Activated B cell treated with CpG ODN at 0.5 μM for 24 hours (primary cell): ENCODE measurements at regions of chr4 and their contacts with region 1.

Region 1: GRCh38 chr4:152640058-152640833 is 39.6 kb downstream of the TMEM154 start:
- DNase-seq: no peak
- ATAC-seq: no peak
- H3K4me3 Mint-ChIP-seq: no peak overlapping the region
- H3K27ac Mint-ChIP-seq: peak overlapping the region; percentile 63
- H3K4me1 Mint-ChIP-seq: peaks cover 69% of the 10 kb centered on the region
- H3K27me3 Mint-ChIP-seq: no peaks in the 10 kb centered on the region
- CTCF ChIP-seq: peak; percentile 85

Region 2: DNA sequence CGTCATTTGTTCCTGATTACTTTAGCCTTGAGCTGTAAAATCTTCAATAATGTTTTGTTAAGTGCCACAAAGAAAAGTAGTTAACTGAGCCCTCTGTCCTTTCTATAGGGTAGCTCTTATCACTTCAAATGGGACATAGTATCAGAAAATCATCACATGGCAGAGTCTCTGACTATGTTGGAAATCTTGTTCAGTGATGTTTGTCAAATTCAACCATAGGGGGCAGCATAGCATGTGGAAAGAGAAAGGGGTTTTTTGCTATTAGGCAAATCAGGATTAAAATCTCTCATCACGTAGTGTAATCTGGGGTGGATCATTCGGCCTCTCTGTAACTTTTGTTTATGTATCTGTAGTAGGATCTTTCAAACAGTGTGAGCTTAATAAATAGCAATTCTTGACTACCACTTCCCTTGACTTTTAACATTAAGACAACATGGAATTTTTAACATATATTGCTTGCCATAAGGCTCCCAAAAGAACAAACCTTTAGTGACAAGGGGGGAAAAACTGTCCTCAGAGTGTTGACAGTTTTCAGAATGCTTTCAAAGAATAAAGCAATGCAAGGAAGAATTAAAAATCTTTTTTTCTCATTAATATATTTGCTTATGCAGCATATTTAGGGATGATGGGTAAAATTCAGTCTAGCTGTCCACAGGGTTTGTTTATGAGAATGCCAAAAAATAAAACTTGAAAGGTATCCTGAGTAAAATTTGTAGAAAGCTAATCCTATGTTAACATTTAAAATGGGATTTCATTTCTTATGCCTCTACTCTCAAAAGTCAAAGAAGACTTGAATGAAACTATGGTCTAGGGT is 231.5 kb before region 1 on chr4:
- CTCF ChIA-PET with region 1: interaction called, 8 read pairs
- POLR2A ChIA-PET with region 1: no interaction called
- intact Hi-C with region 1: loop called (anchors 1 kb)
- DNase-seq: no peak
- ATAC-seq: no peak
- H3K4me3 Mint-ChIP-seq: no peak overlapping the region
- H3K27ac Mint-ChIP-seq: no peak overlapping the region
- H3K4me1 Mint-ChIP-seq: peaks cover 5% of the 10 kb centered on the region
- H3K27me3 Mint-ChIP-seq: no peaks in the 10 kb centered on the region
- CTCF ChIP-seq: no peak

Region 3: DNA sequence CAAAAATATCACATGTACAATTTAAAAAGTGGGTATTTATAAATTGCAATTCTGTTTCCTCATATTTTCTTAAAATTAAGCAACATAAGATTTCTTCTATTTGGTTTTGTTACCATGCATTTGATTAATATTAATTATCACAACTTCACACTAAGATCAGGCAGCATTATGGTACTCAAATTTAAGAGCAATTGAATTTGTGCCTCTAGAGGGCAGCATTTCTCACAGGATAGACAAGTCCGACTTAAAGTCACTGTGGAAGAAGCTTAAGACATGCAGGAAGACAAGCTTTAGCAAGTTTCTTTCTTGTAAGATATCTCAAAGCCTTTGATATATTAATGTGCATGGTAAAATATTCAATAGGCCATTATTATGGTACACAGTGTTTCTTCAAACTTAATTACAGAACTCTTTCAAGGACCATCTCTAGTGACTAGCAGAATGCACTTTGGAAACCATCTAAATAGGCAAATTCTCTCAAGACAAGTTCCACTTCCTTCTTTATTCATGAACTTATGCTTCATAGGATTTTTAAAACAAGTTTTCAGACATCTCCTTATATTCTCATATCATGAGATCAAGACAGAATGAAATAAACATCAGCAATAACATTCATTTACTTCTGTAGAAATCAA is 139.3 kb before region 1 on chr4:
- CTCF ChIA-PET with region 1: interaction called, 143 read pairs
- POLR2A ChIA-PET with region 1: interaction called, 4 read pairs
- intact Hi-C with region 1: loop called (anchors 1 kb)
- DNase-seq: no peak
- ATAC-seq: peak; percentile 79
- H3K4me3 Mint-ChIP-seq: peak overlapping the region; percentile 44
- H3K27ac Mint-ChIP-seq: peak overlapping the region; percentile 83
- H3K4me1 Mint-ChIP-seq: peaks cover 29% of the 10 kb centered on the region
- H3K27me3 Mint-ChIP-seq: no peaks in the 10 kb centered on the region
- CTCF ChIP-seq: peak; percentile 84

Region 4: GRCh38 chr4:152605031-152605430 is 35.2 kb before region 1 on chr4:
- CTCF ChIA-PET with region 1: no interaction called
- POLR2A ChIA-PET with region 1: no interaction called
- intact Hi-C with region 1: no loop called
- DNase-seq: no peak
- ATAC-seq: no peak
- H3K4me3 Mint-ChIP-seq: no peak overlapping the region
- H3K27ac Mint-ChIP-seq: peak overlapping the region; percentile 24
- H3K4me1 Mint-ChIP-seq: no peaks in the 10 kb centered on the region
- H3K27me3 Mint-ChIP-seq: no peaks in the 10 kb centered on the region
- CTCF ChIP-seq: no peak

Region 5: DNA sequence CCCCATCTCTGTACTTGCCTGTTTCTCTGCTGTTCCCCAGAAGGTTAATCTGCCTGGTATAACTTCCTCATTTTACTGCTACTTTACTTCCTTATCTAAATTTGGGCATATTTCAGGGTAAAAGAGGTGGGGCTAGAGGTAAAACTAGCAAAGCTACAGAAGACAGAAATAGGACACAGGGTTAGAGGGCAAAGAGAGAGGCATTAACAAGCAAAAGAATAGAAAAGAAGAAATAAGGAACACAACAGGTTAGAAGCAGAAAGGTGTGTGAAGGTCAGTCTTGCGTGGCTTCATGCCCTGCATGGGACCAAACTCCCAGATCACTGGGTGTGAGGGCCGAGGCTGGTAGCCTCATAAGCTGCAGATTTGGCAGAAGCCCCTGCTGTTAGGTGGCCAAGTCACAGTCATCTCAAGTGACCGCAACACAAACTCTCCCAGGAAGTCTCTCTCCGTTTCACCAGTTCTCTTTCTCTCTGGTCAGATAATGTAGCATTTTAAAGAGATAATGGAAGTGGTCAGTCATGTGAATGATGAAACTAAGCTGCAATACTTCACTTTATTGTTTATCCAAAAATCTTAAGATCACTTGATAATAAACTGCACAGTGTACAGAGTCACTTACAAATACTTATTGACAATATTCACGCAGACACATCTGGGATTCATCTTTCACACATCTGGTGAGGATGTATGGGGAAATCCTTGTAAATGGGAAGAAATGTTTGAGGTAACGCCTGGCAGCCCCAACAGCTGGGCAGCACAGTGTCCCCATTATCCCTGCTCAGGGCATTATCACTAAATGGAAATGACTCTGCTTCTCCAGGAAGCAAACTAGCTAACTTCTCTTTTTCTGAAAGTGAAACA is 23.2 kb after region 1 on chr4:
- CTCF ChIA-PET with region 1: interaction called, 19 read pairs
- POLR2A ChIA-PET with region 1: interaction called, 56 read pairs
- intact Hi-C with region 1: loop called (anchors 1 kb)
- DNase-seq: no peak
- ATAC-seq: peak; percentile 73
- H3K4me3 Mint-ChIP-seq: peak overlapping the region; percentile 77
- H3K27ac Mint-ChIP-seq: peak overlapping the region; percentile 93
- H3K4me1 Mint-ChIP-seq: peaks cover 94% of the 10 kb centered on the region
- H3K27me3 Mint-ChIP-seq: no peaks in the 10 kb centered on the region
- CTCF ChIP-seq: no peak

Region 6: DNA sequence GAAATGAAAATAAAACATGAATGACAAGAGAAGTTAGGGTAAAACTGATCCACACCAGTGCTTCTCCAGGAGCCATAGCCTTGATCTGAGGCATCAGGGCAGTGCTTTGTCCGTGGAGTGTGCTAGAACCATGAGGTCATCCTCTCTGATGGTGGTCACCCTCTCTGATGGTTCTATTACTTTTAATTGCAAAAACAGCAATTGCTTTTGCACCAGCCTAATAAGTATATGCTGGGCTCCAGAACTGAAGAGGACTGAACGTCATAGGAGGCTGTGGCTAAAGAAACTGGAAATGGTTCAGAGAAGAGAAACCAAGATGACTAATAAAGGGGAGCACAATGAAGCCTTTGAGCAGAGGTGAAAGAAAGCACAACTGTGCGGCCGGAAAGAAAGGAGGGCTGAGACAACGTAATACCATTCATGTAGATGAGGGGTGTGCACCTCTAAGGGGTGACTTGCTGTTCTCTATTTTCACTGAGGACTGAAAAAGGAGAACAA is 56.6 kb after region 1 on chr4:
- CTCF ChIA-PET with region 1: interaction called, 3 read pairs
- POLR2A ChIA-PET with region 1: interaction called, 5 read pairs
- intact Hi-C with region 1: loop called (anchors 1 kb)
- DNase-seq: no peak
- ATAC-seq: peak; percentile 95
- H3K4me3 Mint-ChIP-seq: peak overlapping the region; percentile 6
- H3K27ac Mint-ChIP-seq: peak overlapping the region; percentile 60
- H3K4me1 Mint-ChIP-seq: peaks cover 40% of the 10 kb centered on the region
- H3K27me3 Mint-ChIP-seq: peaks cover 1% of the 10 kb centered on the region
- CTCF ChIP-seq: no peak

Region 7: GRCh38 chr4:152779513-152780266 is 139.4 kb after region 1 on chr4 and contains the starts of genes ARFIP1 and TIGD4:
- CTCF ChIA-PET with region 1: no interaction called
- POLR2A ChIA-PET with region 1: no interaction called
- intact Hi-C with region 1: loop called (anchors 2 kb)
- DNase-seq: peak; percentile 93
- ATAC-seq: peak; percentile 88
- H3K4me3 Mint-ChIP-seq: peak within 1 kb of the TSS; percentile 97
- H3K27ac Mint-ChIP-seq: peak within 1 kb of the TSS; percentile 92
- H3K4me1 Mint-ChIP-seq: peaks cover 41% of the 10 kb centered on the region
- H3K27me3 Mint-ChIP-seq: no peaks in the 10 kb centered on the region
- CTCF ChIP-seq: no peak
- total RNA-seq, gene ARFIP1: 16.8 and 19.5 TPM in 2 replicates
- total RNA-seq, gene TIGD4: 0.24 and 0.44 TPM in 2 replicates